ENCODE measurements at regions of chr1 and their contacts with region 1.

Region 1: DNA sequence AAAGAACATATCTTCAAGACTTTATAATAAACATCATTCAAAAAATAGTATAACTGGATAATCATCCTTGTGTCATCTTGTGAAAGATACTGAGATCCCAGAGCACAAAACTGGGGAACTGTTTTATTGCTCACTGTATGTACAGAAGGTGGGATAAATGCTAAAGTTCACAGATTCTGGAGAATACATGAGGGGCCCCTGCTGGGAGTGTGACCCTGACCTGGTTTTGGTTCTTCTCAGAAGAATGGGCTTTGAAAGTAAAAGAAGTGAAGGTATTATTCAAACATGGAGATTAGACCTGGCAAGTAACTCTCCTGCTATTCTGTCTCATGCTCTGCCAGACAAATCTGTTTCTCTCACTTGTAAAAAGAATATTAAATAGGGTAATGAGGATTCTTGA is 14.5 kb downstream of the WDR26 start:
- DNase-seq: no peak
- ATAC-seq: no peak
- H3K4me3 ChIP-seq: no peak overlapping the region
- H3K4me3 Mint-ChIP-seq: no peak overlapping the region
- H3K27ac ChIP-seq: no peak overlapping the region
- H3K27ac Mint-ChIP-seq: no peak overlapping the region
- H3K4me1 ChIP-seq: peaks cover 3% of the 10 kb centered on the region
- H3K4me1 Mint-ChIP-seq: peaks cover 49% of the 10 kb centered on the region
- H3K27me3 ChIP-seq: no peaks in the 10 kb centered on the region
- H3K27me3 Mint-ChIP-seq: no peaks in the 10 kb centered on the region
- CTCF ChIP-seq: no peak

Region 2: DNA sequence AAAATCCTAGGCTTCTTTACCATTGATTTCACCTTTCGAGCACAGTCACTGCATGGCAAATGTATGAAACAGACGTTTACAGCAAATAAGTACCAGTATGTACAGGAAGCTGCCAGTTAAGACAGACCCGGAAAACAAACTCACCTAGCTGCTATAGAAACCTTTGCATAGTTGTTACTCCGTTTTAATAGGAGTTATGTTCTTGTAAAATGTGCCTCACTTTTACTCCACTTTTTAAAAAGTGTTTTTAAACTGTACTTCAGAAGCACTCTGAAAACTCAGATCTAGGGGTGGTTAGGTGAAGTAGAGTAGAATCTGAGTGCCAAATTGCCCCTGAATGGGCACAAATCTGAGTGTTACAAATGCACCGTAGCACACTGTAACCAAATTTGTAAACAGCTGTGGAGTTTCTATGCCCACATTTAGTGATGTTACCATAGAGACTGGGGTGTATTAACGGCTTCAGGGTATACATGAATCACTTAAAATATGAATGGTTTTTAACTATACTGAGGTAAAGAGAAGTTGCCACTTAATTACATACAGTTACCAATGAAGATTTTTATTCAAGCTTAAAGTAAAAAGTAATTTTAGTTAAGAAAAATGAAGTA is 32.7 kb before region 1 on chr1:
- CTCF ChIA-PET with region 1: interaction called, 4 read pairs
- POLR2A ChIA-PET with region 1: no interaction called
- intact Hi-C with region 1: loop called (anchors 5 kb)
- DNase-seq: peak in 3 of 14 experiments; percentile 36 to 57 (median 53)
- ATAC-seq: peak; percentile 90
- H3K4me3 ChIP-seq: no peak overlapping the region
- H3K4me3 Mint-ChIP-seq: peak overlapping the region; percentile 43
- H3K27ac ChIP-seq: peak overlapping the region; percentile 21 to 25
- H3K27ac Mint-ChIP-seq: peak overlapping the region; percentile 74
- H3K4me1 ChIP-seq: peaks cover 4% of the 10 kb centered on the region
- H3K4me1 Mint-ChIP-seq: peaks cover 50% of the 10 kb centered on the region
- H3K27me3 ChIP-seq: no peaks in the 10 kb centered on the region
- H3K27me3 Mint-ChIP-seq: no peaks in the 10 kb centered on the region
- CTCF ChIP-seq: no peak

Measured in CD4-positive, alpha-beta T cell (primary cell).